Activated CD4-positive, alpha-beta T cell treated with anti-CD3 and anti-CD28 coated beads, Interleukin-2, amount 10 ng/mL, durations not matched to agents 7 days and 5 days (primary cell): ENCODE measurements at regions of chr12 and their contacts with region 1.

Region 1: DNA sequence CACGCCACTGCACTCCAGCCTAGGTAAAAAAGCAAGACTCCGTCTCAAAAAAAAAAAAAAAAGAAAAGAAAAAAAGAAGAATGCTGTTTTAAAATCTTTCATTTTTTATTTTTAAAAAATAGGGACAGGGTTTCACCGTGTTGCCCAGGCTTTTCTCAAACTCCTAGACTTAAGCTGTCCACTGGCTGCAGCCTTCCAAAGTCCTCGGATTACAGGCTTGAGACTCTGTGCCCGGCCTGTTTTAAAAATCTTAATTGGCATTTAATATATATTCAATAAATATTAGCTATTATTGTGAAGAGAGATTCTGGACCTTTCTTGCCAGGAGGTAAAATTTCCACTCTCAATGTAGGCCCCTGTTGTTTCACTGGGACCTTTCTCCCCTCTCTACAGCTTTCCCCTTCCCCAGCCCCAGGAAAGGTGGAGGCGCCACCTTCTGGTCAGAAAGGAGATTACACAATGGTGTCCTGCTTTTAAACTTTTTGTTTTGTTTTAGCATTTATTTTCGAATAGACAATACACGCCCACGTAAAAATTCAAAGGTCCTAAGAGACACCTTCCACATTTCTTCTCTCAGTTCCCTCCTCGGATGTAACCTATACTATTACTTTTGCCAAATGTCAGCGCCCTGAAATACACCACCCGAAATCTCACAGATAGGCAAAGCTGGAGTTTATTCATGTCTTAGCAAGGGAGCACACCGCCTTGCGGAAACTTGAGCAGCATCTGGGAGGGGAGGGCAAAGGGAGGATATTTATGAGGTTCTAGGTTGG is 23.8 kb upstream of the PHC1 start:
- DNase-seq: peak; percentile 69
- H3K4me3 Mint-ChIP-seq: peak overlapping the region; percentile 75
- H3K27ac Mint-ChIP-seq: peak overlapping the region; percentile 21
- H3K4me1 Mint-ChIP-seq: peaks cover 5% of the 10 kb centered on the region
- H3K27me3 Mint-ChIP-seq: peaks cover 6% of the 10 kb centered on the region

Region 2: GRCh38 chr12:8662593-8662992 is 227.9 kb before region 1 on chr12 and contains the start of gene MFAP5:
- CTCF ChIA-PET with region 1: interaction called, 11 read pairs
- POLR2A ChIA-PET with region 1: no interaction called
- DNase-seq: no peak
- H3K4me3 Mint-ChIP-seq: no peak within 1 kb of the TSS
- H3K27ac Mint-ChIP-seq: no peak within 1 kb of the TSS
- H3K4me1 Mint-ChIP-seq: no peaks in the 10 kb centered on the region
- H3K27me3 Mint-ChIP-seq: peaks cover 19% of the 10 kb centered on the region
- total RNA-seq, gene MFAP5: not detected

Region 3: DNA sequence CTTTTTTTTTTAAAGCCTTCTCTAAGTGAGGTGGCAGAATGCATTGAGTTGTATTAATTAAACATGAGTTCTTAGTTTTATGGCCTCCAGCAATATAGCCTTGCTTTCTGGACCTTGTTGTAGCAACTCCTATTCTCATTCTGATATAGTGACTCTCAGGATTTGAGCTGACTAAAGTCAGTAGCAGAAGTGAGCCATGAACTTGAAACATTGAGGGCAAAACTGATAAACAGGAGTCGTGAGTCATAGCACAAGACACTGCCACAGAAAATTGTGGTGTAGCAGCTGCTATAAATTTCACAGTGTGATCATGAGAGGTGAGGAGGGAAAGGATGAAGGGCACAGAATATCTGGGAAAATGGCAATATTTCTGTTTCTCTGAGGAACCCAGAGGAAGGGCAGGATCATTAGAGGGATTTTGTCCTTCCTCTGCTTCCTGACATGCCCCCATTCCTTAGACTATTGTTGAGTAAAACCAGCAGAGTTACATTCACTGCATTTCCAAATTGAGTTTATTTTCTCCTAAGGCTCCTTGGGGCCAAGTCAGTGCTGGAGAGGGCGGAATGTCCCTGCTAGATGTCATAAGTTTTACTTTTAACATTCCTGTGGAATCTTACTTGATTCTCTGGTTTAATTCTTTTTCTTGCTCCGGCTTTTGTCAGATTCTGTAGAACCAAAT is 106.3 kb after region 1 on chr12:
- CTCF ChIA-PET with region 1: no interaction called
- POLR2A ChIA-PET with region 1: no interaction called
- DNase-seq: peak; percentile 24
- H3K4me3 Mint-ChIP-seq: no peak overlapping the region
- H3K27ac Mint-ChIP-seq: no peak overlapping the region
- H3K4me1 Mint-ChIP-seq: peaks cover 19% of the 10 kb centered on the region
- H3K27me3 Mint-ChIP-seq: no peaks in the 10 kb centered on the region